Heart left ventricle (tissue), 16 donors: ENCODE measurements at regions of chr12 and their contacts with region 1.

Region 1: GRCh38 chr12:3218228-3219171 is 141.3 kb downstream of the TSPAN9 start:
- DNase-seq: peak; percentile 75 to 88 (median 87)
- ATAC-seq: peak; percentile 53 to 70 (median 68)
- H3K4me3 ChIP-seq: no peak overlapping the region
- H3K27ac ChIP-seq: peak overlapping the region; percentile 63 to 92 (median 83)
- H3K4me1 ChIP-seq: peaks cover 21 to 100% (median 84%) of the 10 kb centered on the region in 12 donors
- H3K27me3 ChIP-seq: no peaks in the 10 kb centered on the region
- CTCF ChIP-seq: peak in 3 of 12 donors; percentile 12 to 26 (median 22)
- POLR2A ChIP-seq: no peak

Region 2: DNA sequence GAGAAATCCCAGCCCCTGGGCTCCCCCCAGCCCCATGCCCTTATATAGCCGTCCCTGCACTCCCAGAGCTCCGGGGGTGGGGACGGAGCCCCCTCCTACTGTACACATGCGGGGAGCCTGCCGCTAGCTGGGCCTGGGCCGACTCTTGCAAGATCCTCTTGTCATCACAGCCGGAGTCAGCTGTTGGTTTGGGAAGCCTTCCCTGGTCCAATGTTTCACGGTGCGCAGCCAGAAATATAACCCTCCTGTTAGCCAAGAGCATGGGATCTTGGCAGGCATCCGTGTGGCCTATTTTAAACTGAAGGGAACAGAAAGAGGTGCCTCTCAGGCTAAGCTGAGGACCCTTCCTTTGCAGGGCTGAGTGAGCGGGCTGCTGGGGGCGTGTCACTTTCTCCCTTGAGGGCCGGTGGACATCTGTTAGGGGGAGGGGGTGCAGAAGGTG is 34.0 kb after region 1 on chr12:
- intact Hi-C with region 1: loop called in 1 of 10 experiments (anchors 5 kb)
- DNase-seq: peak; percentile 89 to 96 (median 92)
- ATAC-seq: peak; percentile 40 to 60 (median 52)
- H3K4me3 ChIP-seq: no peak overlapping the region
- H3K27ac ChIP-seq: peak overlapping the region; percentile 84 to 100 (median 94)
- H3K4me1 ChIP-seq: peaks cover 12 to 97% (median 88%) of the 10 kb centered on the region in 12 donors
- H3K27me3 ChIP-seq: no peaks in the 10 kb centered on the region
- CTCF ChIP-seq: no peak
- POLR2A ChIP-seq: peak in 1 of 2 donors; percentile 38

Region 3: DNA sequence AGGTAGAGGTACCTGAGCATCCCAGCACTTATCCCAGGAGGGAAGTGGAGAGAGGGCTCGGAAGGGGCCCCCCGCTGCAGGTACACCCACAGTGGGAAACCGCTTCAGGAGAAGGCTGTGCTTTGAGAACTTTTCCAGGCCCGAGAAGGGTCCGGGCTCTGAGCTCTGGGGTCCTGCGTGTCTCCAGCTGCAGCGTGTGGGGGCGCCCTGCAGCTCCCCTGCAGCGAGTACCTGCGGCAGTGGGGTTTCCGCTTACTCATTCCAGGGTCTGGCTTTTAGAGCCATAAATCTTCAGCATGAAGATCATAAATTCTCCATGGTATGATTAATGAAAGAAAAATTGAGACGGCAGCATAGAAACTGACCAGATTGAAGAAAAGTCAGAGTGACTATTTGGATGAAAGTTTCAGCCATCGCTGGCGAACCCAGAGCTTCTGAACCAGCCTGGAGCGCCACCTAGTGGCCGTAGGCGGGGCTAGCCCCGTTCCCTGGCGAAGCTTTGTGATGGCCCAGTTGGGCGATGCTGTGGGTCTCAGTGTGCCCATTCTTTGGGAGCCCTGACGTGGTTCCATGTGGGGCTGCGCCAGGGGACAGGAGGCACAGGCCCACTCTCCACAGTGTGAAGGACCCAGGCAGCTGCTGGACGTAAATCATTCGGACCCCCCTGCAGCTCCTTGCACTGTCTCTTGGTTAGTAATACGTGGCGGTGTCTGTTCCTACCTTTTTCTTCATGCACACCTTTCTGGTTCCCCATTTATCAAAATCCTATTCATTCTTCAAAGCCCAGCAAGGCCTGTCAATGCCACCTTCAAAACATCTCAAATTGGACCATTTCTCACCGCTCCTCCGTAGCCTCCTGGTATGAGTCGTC is 56.9 kb after region 1 on chr12:
- intact Hi-C with region 1: loop called in 1 of 10 experiments (anchors 5 kb)
- DNase-seq: peak; percentile 69 to 88 (median 78)
- ATAC-seq: peak; percentile 42 to 63 (median 51)
- H3K4me3 ChIP-seq: no peak overlapping the region
- H3K27ac ChIP-seq: peak overlapping the region in 10 of 12 donors; percentile 49 to 85 (median 68)
- H3K4me1 ChIP-seq: peaks cover 7 to 100% (median 42%) of the 10 kb centered on the region in 12 donors
- H3K27me3 ChIP-seq: no peaks in the 10 kb centered on the region
- CTCF ChIP-seq: peak; percentile 95 to 100 (median 99)
- POLR2A ChIP-seq: no peak

Region 4: DNA sequence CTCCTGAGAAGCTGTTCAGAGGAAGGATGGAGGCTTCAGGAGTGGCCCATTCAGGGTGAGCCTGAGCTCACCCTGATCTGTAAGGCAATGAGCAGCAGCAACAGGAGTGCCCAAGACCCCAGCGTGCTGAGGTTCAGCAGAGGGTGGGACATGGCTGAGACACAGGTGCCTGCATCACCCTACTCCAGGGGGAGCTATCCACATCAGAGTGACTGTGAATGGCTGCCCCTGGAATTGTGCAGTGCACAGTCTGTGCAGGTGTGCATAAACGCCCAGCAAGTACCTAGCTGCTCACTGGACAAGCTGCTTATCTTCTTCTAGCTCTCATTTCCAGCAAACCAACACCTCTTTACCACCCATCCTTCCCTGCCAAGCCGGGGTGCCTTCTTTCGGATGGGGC is 131.9 kb after region 1 on chr12:
- intact Hi-C with region 1: no loop called
- DNase-seq: no peak
- ATAC-seq: peak in 2 of 4 donors; percentile 13 to 29
- H3K4me3 ChIP-seq: no peak overlapping the region
- H3K27ac ChIP-seq: no peak overlapping the region
- H3K4me1 ChIP-seq: peaks cover 0 to 12% (median 4%) of the 10 kb centered on the region in 12 donors
- H3K27me3 ChIP-seq: peaks cover 0 to 5% (median 0%) of the 10 kb centered on the region in 9 donors
- CTCF ChIP-seq: no peak
- POLR2A ChIP-seq: no peak